Activated CD4-positive, alpha-beta T cell treated with anti-CD3 and anti-CD28 coated beads, Interleukin-2, amount 10 ng/mL, durations not matched to agents 24 days and 14 days (primary cell): ENCODE measurements at regions of chr2 and their contacts with region 1.

Region 1: DNA sequence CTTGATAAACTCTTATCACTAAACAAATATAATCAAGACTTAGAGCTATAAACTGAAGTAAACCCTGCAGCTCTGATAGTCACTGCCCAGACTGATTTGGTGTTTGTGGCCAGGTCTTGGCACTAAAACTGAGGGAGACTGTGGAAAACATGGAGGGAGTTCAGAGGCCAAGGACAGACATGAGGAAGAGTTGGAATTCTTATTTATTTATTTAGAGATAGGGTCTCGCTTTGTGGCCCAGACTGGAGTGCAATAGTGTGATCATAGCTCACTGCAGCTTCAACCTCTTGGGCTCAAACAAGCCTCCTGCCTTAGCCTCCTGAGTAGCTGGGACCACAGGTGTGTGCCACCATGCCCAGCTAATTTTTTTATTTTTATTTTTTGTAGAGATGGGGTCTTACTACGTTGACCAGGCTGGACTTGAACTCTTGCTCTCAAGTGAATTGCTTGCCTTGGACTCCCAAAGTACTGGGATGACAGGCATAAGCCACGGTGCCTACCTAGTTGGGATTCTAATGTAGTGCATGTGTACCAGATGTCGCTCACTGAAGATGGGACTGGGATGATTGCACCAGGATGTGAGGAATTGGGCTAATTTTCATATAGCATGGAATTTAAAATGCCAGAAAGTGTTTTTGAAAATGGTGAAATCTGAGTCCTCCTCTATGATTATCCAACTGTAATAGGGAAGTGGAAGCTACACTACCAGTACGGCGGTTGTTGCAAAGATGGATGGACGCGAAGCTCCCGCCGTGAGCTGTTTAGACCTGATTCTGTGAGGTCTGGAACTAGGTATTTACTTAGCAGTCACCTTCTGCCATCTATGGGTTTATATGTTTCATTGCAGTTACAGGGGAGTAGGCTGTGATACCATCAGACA is 52.7 kb upstream of the CTLA4 start:
- DNase-seq: peak; percentile 84
- H3K4me3 Mint-ChIP-seq: peak overlapping the region; percentile 72
- H3K27ac Mint-ChIP-seq: peak overlapping the region; percentile 69
- H3K4me1 Mint-ChIP-seq: peaks cover 47% of the 10 kb centered on the region
- H3K27me3 Mint-ChIP-seq: no peaks in the 10 kb centered on the region

Region 2: GRCh38 chr2:203225423-203226039 is 589.4 kb before region 1 on chr2:
- intact Hi-C with region 1: loop called (anchors 1 kb)
- DNase-seq: peak; percentile 77
- H3K4me3 Mint-ChIP-seq: no peak overlapping the region
- H3K27ac Mint-ChIP-seq: no peak overlapping the region
- H3K4me1 Mint-ChIP-seq: no peaks in the 10 kb centered on the region
- H3K27me3 Mint-ChIP-seq: no peaks in the 10 kb centered on the region

Region 3: DNA sequence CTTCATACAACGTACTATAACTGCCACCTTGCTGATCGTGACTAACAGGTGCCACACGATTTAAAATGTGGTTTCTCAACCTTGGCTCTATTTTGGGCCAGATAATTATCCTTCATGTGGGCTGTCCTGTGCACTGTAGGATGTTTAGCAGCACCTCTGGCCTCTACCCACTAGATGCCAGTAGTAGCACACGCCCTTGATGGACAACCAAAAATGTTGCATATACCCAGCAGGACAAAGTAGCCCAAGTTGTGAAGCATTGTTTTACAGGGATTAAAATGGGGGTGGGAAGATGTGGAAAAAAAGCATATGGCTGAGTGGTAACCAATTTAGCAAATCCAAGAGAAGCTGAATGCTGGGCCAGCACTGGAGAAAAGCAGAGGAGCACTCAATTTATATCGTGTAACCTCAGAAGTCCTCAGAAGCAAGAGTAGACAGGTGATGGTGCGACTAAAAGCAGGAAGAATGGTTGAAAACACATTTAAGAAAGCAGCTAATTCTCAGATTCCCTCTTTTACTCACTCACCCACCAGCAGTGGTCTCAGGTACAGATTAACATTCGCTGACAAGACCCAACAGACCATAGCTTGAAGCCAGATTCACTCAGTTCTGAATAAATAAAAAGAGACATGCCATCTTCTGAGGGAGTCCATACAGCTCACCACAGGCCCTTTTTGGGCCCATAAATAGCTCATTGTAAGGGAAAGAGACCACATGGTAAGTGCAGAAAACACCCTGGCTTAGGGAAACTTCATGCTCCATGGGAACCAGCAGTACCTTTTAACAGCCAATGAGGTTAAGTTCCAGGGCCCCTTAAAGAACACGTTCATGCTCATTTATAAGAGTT is 330.4 kb before region 1 on chr2:
- intact Hi-C with region 1: loop called (anchors 1 kb)
- DNase-seq: peak; percentile 84
- H3K4me3 Mint-ChIP-seq: no peak overlapping the region
- H3K27ac Mint-ChIP-seq: peak overlapping the region; percentile 9
- H3K4me1 Mint-ChIP-seq: peaks cover 7% of the 10 kb centered on the region
- H3K27me3 Mint-ChIP-seq: no peaks in the 10 kb centered on the region

Region 4: DNA sequence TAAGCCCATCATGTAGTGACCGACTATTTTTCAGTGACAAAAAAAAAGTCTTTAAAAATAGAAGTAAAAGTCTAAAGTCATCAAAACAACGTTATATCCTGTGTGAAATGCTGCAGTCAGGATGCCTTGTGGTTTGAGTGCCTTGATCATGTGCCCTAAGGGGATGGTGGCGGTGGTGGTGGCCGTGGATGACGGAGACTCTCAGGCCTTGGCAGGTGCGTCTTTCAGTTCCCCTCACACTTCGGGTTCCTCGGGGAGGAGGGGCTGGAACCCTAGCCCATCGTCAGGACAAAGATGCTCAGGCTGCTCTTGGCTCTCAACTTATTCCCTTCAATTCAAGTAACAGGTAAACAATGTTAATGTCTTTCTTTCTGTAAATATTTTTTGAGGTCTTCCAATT is 108.5 kb before region 1 on chr2 and contains the start of gene CD28:
- intact Hi-C with region 1: loop called (anchors 1 kb)
- DNase-seq: peak; percentile 97
- H3K4me3 Mint-ChIP-seq: peak within 1 kb of the TSS; percentile 92
- H3K27ac Mint-ChIP-seq: peak within 1 kb of the TSS; percentile 98
- H3K4me1 Mint-ChIP-seq: peaks cover 46% of the 10 kb centered on the region
- H3K27me3 Mint-ChIP-seq: no peaks in the 10 kb centered on the region
- total RNA-seq, gene CD28: 130 and 132 TPM in 2 replicates

Region 5: GRCh38 chr2:203782262-203782976 is 32.5 kb before region 1 on chr2:
- intact Hi-C with region 1: loop called (anchors 1 kb)
- DNase-seq: peak; percentile 89
- H3K4me3 Mint-ChIP-seq: no peak overlapping the region
- H3K27ac Mint-ChIP-seq: peak overlapping the region; percentile 81
- H3K4me1 Mint-ChIP-seq: peaks cover 50% of the 10 kb centered on the region
- H3K27me3 Mint-ChIP-seq: no peaks in the 10 kb centered on the region

Region 6: DNA sequence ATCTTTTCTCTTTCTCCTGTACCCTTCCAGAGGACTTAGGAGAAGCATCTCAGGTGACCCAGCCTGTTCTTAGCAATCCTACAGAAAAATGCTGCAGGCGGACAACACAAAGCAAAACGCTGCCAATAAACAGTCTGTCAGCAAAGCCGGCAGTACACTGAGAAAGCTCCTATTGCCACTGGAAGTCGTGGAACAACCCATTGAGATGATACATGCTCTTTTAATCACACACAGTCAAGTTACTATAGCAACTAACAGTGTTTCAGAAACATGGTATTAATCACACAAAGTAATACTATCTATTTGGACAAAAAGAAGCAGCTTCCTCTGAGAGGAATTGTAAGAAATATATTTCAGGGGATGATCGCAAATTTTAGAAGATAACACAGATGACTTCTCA is 63.2 kb after region 1 on chr2:
- intact Hi-C with region 1: no loop called
- DNase-seq: no peak
- H3K4me3 Mint-ChIP-seq: no peak overlapping the region
- H3K27ac Mint-ChIP-seq: peak overlapping the region; percentile 10
- H3K4me1 Mint-ChIP-seq: peaks cover 27% of the 10 kb centered on the region
- H3K27me3 Mint-ChIP-seq: no peaks in the 10 kb centered on the region

Region 7: GRCh38 chr2:203909261-203909967 is 94.5 kb after region 1 on chr2:
- intact Hi-C with region 1: loop called (anchors 1 kb)
- DNase-seq: peak; percentile 83
- H3K4me3 Mint-ChIP-seq: peak overlapping the region; percentile 63
- H3K27ac Mint-ChIP-seq: peak overlapping the region; percentile 76
- H3K4me1 Mint-ChIP-seq: peaks cover 19% of the 10 kb centered on the region
- H3K27me3 Mint-ChIP-seq: peaks cover 7% of the 10 kb centered on the region

Region 8: GRCh38 chr2:203972066-203972465 is 157.2 kb after region 1 on chr2:
- intact Hi-C with region 1: no loop called
- DNase-seq: no peak
- H3K4me3 Mint-ChIP-seq: no peak overlapping the region
- H3K27ac Mint-ChIP-seq: no peak overlapping the region
- H3K4me1 Mint-ChIP-seq: peaks cover 13% of the 10 kb centered on the region
- H3K27me3 Mint-ChIP-seq: no peaks in the 10 kb centered on the region

Region 9: GRCh38 chr2:204005940-204006721 is 191.2 kb after region 1 on chr2:
- intact Hi-C with region 1: no loop called
- DNase-seq: peak; percentile 74
- H3K4me3 Mint-ChIP-seq: peak overlapping the region; percentile 39
- H3K27ac Mint-ChIP-seq: peak overlapping the region; percentile 93
- H3K4me1 Mint-ChIP-seq: peaks cover 74% of the 10 kb centered on the region
- H3K27me3 Mint-ChIP-seq: no peaks in the 10 kb centered on the region